Left lung (tissue), 14 donors: ENCODE measurements at regions of chr2 and their contacts with region 1.

Region 1: GRCh38 chr2:118855451-118856279 is 8.2 kb upstream of the EN1 start:
- DNase-seq: peak; percentile 61 to 94 (median 79)
- ATAC-seq: peak; percentile 99
- H3K4me3 ChIP-seq: peak overlapping the region in 1 of 2 donors; percentile 19
- H3K27ac ChIP-seq: no peak overlapping the region
- H3K4me1 ChIP-seq: peaks cover 8 to 17% of the 10 kb centered on the region in 2 donors
- H3K27me3 ChIP-seq: peaks cover 96 to 100% of the 10 kb centered on the region in 2 donors
- CTCF ChIP-seq: peak; percentile 96 to 98

Region 2: DNA sequence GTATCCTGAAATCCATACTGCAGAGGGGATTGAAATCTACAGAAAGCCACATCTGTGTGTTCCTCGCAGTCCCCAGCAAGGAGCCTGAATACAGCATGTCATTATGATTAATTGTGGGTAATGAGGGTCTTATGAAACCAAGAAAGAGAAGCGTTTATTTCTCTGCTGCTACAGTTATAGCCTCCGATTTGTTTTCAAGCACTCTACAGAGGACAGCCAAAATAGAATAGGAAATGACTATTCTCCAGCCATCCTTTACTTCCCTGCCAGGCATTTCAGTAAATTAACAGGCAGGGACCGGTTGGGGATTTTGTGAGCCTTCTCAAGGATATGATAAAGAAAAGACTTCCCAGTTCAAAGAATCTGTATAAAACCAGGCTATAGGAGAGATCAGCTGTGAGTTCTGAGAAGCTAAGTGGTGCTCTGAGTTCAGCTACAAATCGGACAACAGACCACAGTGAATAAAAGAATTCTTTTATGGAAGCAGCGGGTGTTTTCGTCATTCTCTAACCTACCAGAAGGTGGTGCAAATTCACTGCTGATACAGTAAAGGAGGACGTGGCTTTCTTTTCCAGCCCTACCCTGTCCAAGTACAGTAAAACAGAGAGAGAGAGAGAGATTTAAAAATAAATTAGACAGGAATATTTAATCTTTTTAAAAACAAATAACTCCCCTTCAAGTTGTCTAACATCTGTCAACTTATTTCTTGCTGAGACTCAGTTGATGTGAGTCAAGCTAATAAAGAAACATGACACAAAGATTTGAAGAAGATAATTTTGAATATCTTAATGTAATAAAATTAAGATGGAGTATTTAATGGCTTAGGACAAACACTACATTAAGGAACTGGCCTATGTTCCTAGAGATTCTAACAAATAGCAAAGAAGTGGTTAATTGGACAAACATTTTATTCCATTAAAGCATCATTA is 633.7 kb before region 1 on chr2:
- intact Hi-C with region 1: loop called in 1 of 2 experiments (anchors 5 kb)
- DNase-seq: peak in 2 of 4 donors; percentile 54 to 77
- ATAC-seq: peak; percentile 96
- H3K4me3 ChIP-seq: no peak overlapping the region
- H3K27ac ChIP-seq: no peak overlapping the region
- H3K4me1 ChIP-seq: peaks cover 0 to 13% of the 10 kb centered on the region in 2 donors
- H3K27me3 ChIP-seq: peaks cover 72 to 100% of the 10 kb centered on the region in 2 donors
- CTCF ChIP-seq: peak; percentile 46 to 54

Region 3: GRCh38 chr2:118539290-118539689 is 316.4 kb before region 1 on chr2:
- intact Hi-C with region 1: loop called in 1 of 2 experiments (anchors 5 kb)
- DNase-seq: peak in 1 of 4 donors; percentile 5
- ATAC-seq: no peak
- H3K4me3 ChIP-seq: no peak overlapping the region
- H3K27ac ChIP-seq: no peak overlapping the region
- H3K4me1 ChIP-seq: no peaks in the 10 kb centered on the region
- H3K27me3 ChIP-seq: peaks cover 0 to 4% of the 10 kb centered on the region in 2 donors
- CTCF ChIP-seq: no peak

Region 4: DNA sequence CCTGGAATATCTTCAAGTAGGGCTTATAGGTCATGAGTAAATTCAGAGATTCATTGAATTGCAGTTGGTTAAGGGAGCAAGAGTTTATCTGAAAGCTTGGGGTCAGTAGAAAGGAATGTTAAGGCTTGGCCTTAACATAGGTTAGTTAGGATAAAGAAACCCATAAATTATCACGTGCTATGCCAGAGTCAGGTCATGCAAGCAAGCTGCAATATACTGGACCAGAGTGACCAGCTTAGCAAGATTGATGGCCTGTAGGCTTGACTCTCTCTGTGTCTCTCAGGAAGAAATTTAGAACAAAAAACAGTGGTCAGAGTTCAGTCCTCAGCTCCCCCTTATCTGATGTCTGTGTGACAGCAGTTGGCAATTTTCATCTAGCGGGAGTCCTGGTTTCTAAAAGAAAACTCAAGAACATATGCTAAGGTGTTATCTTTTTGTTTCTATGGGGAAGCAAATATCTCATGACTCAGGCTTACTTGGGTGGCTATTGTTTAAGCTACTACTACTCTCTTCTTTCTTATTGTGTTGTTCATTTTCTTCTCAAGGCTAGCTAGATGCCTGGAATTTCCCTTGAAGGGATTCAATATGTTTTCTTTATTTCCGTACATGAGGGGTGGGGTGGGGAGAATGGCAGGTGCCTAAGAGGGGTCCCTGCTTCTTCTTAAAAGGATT is 57.6 kb after region 1 on chr2:
- intact Hi-C with region 1: no loop called
- DNase-seq: no peak
- ATAC-seq: no peak
- H3K4me3 ChIP-seq: no peak overlapping the region
- H3K27ac ChIP-seq: peak overlapping the region in 1 of 2 donors; percentile 55
- H3K4me1 ChIP-seq: no peaks in the 10 kb centered on the region
- H3K27me3 ChIP-seq: no peaks in the 10 kb centered on the region
- CTCF ChIP-seq: no peak